MCF 10A (cell line): ENCODE measurements at regions of chr1 and their contacts with region 1.

Region 1: DNA sequence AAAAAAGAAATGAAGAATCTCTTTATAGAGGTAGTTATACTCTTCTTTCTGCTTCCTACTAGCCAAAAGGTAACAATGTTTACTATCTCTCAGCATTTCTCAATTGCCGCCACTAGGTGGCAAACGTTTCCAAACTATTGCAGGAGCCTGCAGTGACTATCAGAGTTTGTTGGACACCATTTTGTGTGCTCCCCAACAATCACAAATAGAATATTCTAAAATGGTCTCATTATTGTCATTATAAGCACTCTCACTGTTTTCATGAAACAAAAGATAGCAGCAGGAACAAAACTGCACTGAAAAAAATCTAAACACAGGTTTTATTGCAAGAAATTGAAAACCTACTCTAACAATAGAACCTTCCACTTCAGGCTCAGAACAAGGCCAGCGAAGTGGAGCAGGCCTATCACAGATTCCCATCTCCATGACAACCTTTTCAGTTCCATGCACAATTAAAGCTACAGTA is 83.9 kb upstream of the PLPPR4 start:
- DNase-seq: peak; percentile 79
- H3K4me3 Mint-ChIP-seq: no peak overlapping the region
- H3K27ac Mint-ChIP-seq: no peak overlapping the region
- H3K4me1 Mint-ChIP-seq: no peaks in the 10 kb centered on the region
- H3K27me3 Mint-ChIP-seq: no peaks in the 10 kb centered on the region
- CTCF ChIP-seq: peak; percentile 70

Region 2: GRCh38 chr1:98794196-98794886 is 386.0 kb before region 1 on chr1:
- CTCF ChIA-PET with region 1: interaction called, 13 read pairs
- POLR2A ChIA-PET with region 1: no interaction called
- intact Hi-C with region 1: loop called (anchors 2 kb)
- DNase-seq: peak; percentile 79
- H3K4me3 Mint-ChIP-seq: no peak overlapping the region
- H3K27ac Mint-ChIP-seq: no peak overlapping the region
- H3K4me1 Mint-ChIP-seq: peaks cover 5% of the 10 kb centered on the region
- H3K27me3 Mint-ChIP-seq: no peaks in the 10 kb centered on the region
- CTCF ChIP-seq: peak; percentile 72

Region 3: DNA sequence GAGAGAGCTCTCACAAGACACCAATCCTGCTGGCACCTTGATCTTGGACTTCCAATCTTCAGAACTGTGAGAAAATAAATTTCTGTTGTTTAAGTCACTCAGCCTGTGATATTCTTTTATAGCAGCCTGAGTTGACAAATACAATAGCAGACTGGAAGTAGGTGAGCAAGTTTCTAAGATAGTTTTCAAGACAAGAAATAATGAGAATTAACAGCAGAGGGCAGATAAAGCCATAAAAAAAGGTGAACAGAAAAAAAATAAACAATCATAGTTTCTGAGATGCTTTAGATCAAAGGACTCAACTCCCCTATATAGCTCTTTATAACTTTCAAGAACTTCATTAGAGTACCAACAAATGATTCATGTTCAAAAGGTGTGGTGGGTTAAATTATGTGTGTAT is 295.5 kb before region 1 on chr1:
- CTCF ChIA-PET with region 1: interaction called, 5 read pairs
- POLR2A ChIA-PET with region 1: no interaction called
- intact Hi-C with region 1: loop called (anchors 5 kb)
- DNase-seq: no peak
- H3K4me3 Mint-ChIP-seq: no peak overlapping the region
- H3K27ac Mint-ChIP-seq: no peak overlapping the region
- H3K4me1 Mint-ChIP-seq: no peaks in the 10 kb centered on the region
- H3K27me3 Mint-ChIP-seq: no peaks in the 10 kb centered on the region
- CTCF ChIP-seq: no peak

Region 4: DNA sequence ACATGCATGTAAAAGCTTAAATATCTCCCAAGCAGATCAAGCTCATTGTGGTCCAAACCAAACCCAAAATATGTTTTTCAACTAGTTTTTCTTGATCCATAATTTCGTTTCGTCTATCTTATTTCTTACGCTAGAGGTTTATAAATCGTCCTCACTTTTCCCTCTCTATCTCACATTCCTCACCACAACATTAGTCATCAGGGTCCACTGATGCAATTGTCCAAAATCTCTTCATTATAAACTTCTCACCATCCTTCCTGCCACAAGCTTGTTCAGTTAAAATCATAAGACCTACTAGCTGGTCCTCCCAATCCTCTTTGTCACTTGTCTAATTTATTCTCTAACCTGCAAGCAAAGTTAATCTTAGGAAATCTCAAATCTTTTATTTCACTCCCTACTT is 292.5 kb after region 1 on chr1:
- CTCF ChIA-PET with region 1: interaction called, 10 read pairs
- POLR2A ChIA-PET with region 1: no interaction called
- intact Hi-C with region 1: no loop called
- DNase-seq: no peak
- H3K4me3 Mint-ChIP-seq: no peak overlapping the region
- H3K27ac Mint-ChIP-seq: no peak overlapping the region
- H3K4me1 Mint-ChIP-seq: peaks cover 6% of the 10 kb centered on the region
- H3K27me3 Mint-ChIP-seq: no peaks in the 10 kb centered on the region
- CTCF ChIP-seq: no peak

Region 5: GRCh38 chr1:99526926-99527477 is 346.6 kb after region 1 on chr1:
- CTCF ChIA-PET with region 1: interaction called, 35 read pairs
- POLR2A ChIA-PET with region 1: interaction called, 3 read pairs
- intact Hi-C with region 1: loop called (anchors 1 kb)
- DNase-seq: peak; percentile 21
- H3K4me3 Mint-ChIP-seq: no peak overlapping the region
- H3K27ac Mint-ChIP-seq: no peak overlapping the region
- H3K4me1 Mint-ChIP-seq: no peaks in the 10 kb centered on the region
- H3K27me3 Mint-ChIP-seq: no peaks in the 10 kb centered on the region
- CTCF ChIP-seq: peak; percentile 30